Calu3 (cell line): ENCODE measurements at regions of chr10 and their contacts with region 1.

Region 1: GRCh38 chr10:73287441-73287840 is 35.0 kb upstream of the MRPS16 start:
- DNase-seq: no peak
- H3K4me3 Mint-ChIP-seq: no peak overlapping the region
- H3K27ac Mint-ChIP-seq: no peak overlapping the region
- H3K4me1 Mint-ChIP-seq: no peaks in the 10 kb centered on the region
- H3K27me3 Mint-ChIP-seq: no peaks in the 10 kb centered on the region
- CTCF ChIP-seq: no peak

Region 2: GRCh38 chr10:72875250-72876055 is 412.0 kb before region 1 on chr10:
- CTCF ChIA-PET with region 1: no interaction called
- intact Hi-C with region 1: no loop called
- DNase-seq: peak; percentile 28
- H3K4me3 Mint-ChIP-seq: no peak overlapping the region
- H3K27ac Mint-ChIP-seq: no peak overlapping the region
- H3K4me1 Mint-ChIP-seq: no peaks in the 10 kb centered on the region
- H3K27me3 Mint-ChIP-seq: no peaks in the 10 kb centered on the region
- CTCF ChIP-seq: peak; percentile 71

Region 3: GRCh38 chr10:72885953-72886352 is 401.5 kb before region 1 on chr10:
- CTCF ChIA-PET with region 1: no interaction called
- intact Hi-C with region 1: no loop called
- DNase-seq: no peak
- H3K4me3 Mint-ChIP-seq: no peak overlapping the region
- H3K27ac Mint-ChIP-seq: no peak overlapping the region
- H3K4me1 Mint-ChIP-seq: no peaks in the 10 kb centered on the region
- H3K27me3 Mint-ChIP-seq: no peaks in the 10 kb centered on the region
- CTCF ChIP-seq: no peak

Region 4: DNA sequence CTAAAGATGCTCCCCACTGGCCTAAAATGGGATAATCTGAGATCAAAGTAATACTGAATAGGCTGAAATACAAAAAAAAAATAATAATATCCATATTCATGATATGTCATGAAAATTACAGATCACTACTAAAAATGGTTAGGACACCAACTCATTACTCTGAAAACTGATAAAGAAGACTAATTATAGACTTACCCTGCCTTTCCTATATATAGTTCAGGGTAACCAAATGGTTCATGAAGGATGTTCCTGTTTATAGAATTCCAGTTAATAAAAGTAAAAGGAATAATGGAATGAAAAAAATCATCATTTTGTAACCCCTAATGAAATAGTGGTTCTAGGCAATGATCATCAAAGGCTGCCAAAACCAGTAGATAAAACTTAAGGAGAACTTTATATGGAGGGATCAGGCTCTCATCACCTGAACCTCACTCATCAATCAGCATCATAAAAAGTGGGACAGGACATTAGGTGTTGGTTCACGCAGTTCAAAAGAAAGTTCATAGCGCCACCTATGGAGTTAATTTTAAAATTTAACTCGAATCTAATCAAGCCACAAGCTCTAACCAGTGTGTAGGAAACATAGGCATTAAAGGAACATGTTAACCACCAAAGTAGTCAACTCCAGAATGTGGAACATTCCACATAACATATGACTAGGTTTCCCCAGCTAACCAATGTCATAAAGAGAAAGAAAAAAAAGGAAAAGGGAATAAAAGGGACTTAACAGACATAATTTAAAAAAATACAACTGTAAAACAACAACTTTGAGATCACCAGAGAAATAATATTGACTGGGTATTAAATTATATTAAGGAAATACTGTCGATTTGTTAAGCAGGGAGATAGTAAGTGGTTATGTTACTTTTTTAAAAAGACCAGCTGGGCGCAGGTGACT is 226.5 kb before region 1 on chr10:
- CTCF ChIA-PET with region 1: no interaction called
- intact Hi-C with region 1: no loop called
- DNase-seq: no peak
- H3K4me3 Mint-ChIP-seq: no peak overlapping the region
- H3K27ac Mint-ChIP-seq: no peak overlapping the region
- H3K4me1 Mint-ChIP-seq: no peaks in the 10 kb centered on the region
- H3K27me3 Mint-ChIP-seq: no peaks in the 10 kb centered on the region
- CTCF ChIP-seq: no peak

Region 5: GRCh38 chr10:73209705-73210104 is 77.7 kb before region 1 on chr10:
- CTCF ChIA-PET with region 1: no interaction called
- intact Hi-C with region 1: no loop called
- DNase-seq: no peak
- H3K4me3 Mint-ChIP-seq: no peak overlapping the region
- H3K27ac Mint-ChIP-seq: no peak overlapping the region
- H3K4me1 Mint-ChIP-seq: no peaks in the 10 kb centered on the region
- H3K27me3 Mint-ChIP-seq: no peaks in the 10 kb centered on the region
- CTCF ChIP-seq: no peak

Region 6: GRCh38 chr10:73263948-73264347 is 23.5 kb before region 1 on chr10:
- CTCF ChIA-PET with region 1: no interaction called
- intact Hi-C with region 1: loop called (anchors 2 kb)
- DNase-seq: no peak
- H3K4me3 Mint-ChIP-seq: no peak overlapping the region
- H3K27ac Mint-ChIP-seq: peak overlapping the region; percentile 29
- H3K4me1 Mint-ChIP-seq: peaks cover 24% of the 10 kb centered on the region
- H3K27me3 Mint-ChIP-seq: no peaks in the 10 kb centered on the region
- CTCF ChIP-seq: no peak